Heart right ventricle (tissue), 16 donors: ENCODE measurements at regions of chr20 and their contacts with region 1.

Region 1: DNA sequence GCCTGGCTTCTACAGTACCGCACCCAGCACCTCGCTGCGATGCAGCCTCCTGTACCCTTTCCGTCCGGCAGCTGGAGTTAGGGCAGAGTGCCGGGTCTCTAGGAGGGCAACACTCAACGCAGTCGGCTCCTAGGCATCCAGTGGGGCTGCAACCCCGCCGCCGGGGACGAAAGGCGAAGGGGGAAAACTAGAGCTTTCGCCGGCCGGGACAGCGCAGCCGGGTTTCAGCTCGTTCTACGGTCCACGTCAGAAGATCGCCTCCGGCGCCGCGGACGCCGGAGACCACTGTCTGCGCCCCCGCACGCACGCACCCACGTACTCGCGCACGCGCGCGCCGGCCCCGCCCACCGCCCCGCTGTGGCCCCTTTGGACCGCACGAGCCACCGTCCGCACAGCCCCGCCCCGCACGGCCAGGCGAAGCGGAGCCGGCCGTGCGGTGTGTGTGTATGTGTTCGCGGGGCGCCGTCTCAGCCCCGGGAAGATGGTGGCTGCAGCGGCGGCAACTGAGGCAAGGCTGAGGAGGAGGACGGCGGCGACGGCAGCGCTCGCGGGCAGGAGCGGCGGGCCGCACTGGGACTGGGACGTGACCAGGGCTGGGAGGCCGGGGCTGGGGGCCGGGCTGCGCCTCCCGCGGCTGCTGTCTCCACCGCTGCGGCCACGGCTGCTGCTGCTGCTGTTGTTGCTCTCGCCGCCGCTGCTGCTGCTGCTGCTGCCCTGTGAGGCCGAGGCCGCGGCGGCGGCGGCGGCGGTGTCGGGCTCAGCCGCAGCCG is at the start of gene ATRN:
- DNase-seq: peak; percentile 94 to 95
- ATAC-seq: peak; percentile 98 to 99 (median 99)
- H3K4me3 ChIP-seq: peak within 1 kb of the TSS; percentile 68 to 100 (median 96)
- H3K27ac ChIP-seq: peak within 1 kb of the TSS; percentile 36 to 97 (median 86)
- H3K4me1 ChIP-seq: peaks cover 6 to 35% (median 29%) of the 10 kb centered on the region in 9 donors
- H3K27me3 ChIP-seq: no peaks in the 10 kb centered on the region
- CTCF ChIP-seq: peak in 1 of 9 donors; percentile 15
- total RNA-seq, gene ATRN: 30.9 to 44.0 (median 38.6) TPM

Region 2: DNA sequence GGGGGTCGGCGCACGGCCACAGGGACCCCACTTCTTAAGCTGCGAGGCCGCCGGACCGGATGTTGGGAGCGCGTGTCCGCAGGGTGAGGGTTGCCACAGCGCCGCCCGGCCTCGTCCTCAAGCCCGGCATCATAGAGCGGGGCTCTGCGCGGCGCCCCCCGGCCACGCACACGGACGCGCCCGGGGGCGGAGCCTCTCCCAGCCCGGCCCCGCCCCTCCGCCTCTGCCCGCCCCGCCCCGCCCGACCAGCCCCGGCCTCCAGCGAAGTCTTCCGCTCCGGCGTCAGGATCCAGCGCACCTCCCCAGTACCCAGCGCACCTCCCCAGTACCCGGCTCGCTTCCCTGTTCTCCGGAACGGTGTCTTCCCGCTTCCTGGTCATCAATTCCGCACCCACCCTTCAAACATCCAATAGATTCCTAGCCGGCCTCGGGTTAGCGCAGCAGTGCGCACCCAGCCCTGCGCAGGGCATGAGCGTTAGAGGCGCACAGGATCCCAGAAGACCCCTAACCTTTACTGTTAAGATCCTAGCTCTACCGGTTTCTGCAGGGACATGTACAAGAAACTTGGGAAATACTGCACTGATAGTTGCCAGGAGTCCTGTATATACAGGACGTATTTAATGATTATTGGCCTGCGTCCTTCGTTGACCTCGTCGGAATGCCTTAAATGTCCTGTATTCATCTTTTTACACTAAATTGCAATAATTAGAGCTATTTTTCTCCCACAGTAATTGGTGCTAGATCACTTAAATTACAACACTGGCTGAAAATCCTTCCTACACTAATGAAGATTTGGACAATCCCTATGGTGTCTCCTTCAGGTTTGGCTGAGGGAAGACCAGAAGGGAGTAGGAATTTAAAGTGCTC is 62.8 kb before region 1 on chr20:
- intact Hi-C with region 1: loop called in 5 of 10 experiments (anchors 2 kb)
- DNase-seq: peak; percentile 78 to 80
- ATAC-seq: peak; percentile 81 to 89 (median 86)
- H3K4me3 ChIP-seq: peak overlapping the region; percentile 54 to 94 (median 88)
- H3K27ac ChIP-seq: peak overlapping the region; percentile 89 to 98 (median 95)
- H3K4me1 ChIP-seq: peaks cover 0 to 40% (median 26%) of the 10 kb centered on the region in 9 donors
- H3K27me3 ChIP-seq: no peaks in the 10 kb centered on the region
- CTCF ChIP-seq: no peak

Region 3: DNA sequence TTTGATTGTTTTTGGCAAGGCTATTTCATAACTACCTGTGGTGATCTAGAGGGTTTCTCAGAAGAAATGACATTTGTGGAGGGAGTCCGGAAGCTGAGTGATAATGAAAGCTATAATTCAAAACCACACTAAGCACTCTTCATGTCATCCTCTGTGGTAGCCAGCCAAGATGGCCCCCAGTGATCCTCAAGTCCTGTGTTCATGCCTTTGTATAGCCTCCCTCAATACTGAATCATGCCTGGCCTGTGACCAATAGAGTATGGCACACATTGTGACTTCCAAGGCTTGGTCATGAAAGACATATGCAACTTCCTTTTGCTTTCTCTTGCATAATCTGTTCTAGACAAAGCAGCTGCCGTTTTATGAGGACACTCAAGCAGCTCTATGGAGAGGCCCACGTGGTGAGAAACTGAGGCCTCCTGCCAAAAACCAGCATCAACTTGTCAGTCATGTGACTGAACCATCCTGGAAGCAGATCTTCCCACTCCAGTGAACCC is 50.6 kb before region 1 on chr20:
- intact Hi-C with region 1: loop called in 1 of 10 experiments (anchors 2 kb)
- DNase-seq: no peak
- ATAC-seq: peak; percentile 34 to 87 (median 57)
- H3K4me3 ChIP-seq: no peak overlapping the region
- H3K27ac ChIP-seq: peak overlapping the region in 1 of 10 donors; percentile 45
- H3K4me1 ChIP-seq: peaks cover 0 to 20% (median 0%) of the 10 kb centered on the region in 9 donors
- H3K27me3 ChIP-seq: no peaks in the 10 kb centered on the region
- CTCF ChIP-seq: no peak

Region 4: GRCh38 chr20:3452690-3453089 is 18.1 kb before region 1 on chr20:
- intact Hi-C with region 1: loop called in 1 of 10 experiments (anchors 1 kb)
- DNase-seq: no peak
- ATAC-seq: no peak
- H3K4me3 ChIP-seq: no peak overlapping the region
- H3K27ac ChIP-seq: no peak overlapping the region
- H3K4me1 ChIP-seq: no peaks in the 10 kb centered on the region
- H3K27me3 ChIP-seq: peaks cover 0 to 6% (median 0%) of the 10 kb centered on the region in 7 donors
- CTCF ChIP-seq: no peak